PC-3 (cell line): ENCODE measurements at regions of chr2 and their contacts with region 1.

Region 1: DNA sequence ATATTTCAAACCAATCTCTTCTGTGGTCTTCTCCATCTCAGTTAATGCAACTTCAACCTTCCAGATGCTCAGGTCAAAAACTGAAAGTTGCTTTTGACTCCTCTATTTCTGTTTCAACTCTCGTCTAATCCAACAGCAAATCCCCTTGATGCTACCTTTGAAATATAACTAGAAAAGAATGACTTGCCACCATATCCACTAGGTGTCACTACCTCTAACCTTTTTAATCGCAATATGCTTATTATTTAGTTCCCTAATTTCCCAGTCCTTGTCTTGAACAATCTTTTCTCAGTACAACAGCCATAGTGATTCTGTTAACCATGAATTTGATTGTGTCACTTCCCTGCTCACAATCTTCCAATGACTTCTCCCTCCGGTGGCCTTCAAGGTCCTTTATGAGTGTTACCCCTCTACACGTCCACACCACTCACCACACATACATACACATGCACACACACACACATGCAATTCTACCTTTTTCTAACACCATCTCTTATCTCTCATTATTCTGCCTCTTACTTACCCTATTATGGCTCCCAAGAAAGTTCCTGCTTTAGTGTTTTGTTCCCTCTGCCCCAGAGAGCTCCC is 245.5 kb upstream of the KCNJ3 start:
- DNase-seq: peak; percentile 42
- ATAC-seq: no peak
- H3K4me3 ChIP-seq: no peak overlapping the region
- H3K27ac ChIP-seq: no peak overlapping the region
- H3K4me1 ChIP-seq: no peaks in the 10 kb centered on the region
- H3K27me3 ChIP-seq: no peaks in the 10 kb centered on the region
- CTCF ChIP-seq: peak; percentile 67

Region 2: DNA sequence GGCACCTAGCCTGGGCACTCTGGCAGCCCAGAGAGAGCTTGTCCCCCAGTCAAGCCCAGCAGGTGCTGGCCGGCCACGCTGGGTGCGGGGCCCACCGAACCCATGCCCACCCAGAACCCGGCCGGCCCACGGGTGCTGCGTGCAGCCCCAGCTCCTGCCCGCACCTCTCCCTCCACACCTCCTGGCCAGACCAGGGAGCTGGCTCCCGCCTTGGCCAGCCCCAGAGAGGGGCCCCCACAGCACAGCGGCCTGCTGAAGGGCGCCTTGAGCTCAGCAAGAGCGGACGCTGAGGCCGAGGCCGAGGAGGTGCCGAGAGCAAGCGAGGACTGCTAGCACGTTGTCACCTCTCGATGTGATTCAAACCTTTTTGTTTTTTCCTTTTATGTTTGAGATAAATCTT is 161.5 kb before region 1 on chr2:
- CTCF ChIA-PET with region 1: no interaction called
- POLR2A ChIA-PET with region 1: no interaction called
- intact Hi-C with region 1: no loop called
- DNase-seq: no peak
- ATAC-seq: no peak
- H3K4me3 ChIP-seq: no peak overlapping the region
- H3K27ac ChIP-seq: no peak overlapping the region
- H3K4me1 ChIP-seq: no peaks in the 10 kb centered on the region
- H3K27me3 ChIP-seq: no peaks in the 10 kb centered on the region
- CTCF ChIP-seq: no peak

Region 3: DNA sequence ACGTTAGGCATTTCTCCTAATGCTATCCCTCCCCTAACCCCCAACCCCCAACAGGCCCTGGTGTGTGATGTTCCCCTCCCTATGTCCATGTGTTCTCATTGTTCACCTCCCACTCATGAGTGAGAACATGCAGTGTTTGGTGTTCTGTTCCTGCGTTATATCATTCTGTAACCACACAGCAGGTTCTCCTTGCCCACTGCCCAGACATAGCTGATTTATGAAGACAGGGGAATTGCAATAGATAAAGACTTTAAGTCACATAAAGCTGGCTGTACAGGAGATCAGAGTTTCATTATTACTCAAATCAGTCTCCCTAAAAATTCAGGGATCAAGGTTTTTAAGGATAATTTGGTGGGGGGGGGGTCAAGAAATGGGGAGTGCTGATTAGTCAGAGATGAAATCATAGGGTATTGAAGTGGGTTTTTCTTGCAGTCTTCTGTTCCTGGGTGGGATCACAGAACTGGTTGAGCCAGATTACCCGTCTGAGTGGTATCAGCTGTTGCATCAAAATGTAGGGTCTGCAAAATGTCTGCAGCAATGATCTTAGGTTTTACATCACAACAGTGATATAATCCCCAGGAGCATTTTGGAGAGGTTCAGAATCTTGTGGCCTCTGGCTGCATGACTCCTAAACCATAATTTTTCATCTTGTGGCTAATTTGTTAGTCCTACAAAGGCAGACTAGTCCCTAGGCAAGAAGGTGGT is 146.6 kb before region 1 on chr2:
- CTCF ChIA-PET with region 1: no interaction called
- POLR2A ChIA-PET with region 1: no interaction called
- intact Hi-C with region 1: no loop called
- DNase-seq: no peak
- ATAC-seq: no peak
- H3K4me3 ChIP-seq: no peak overlapping the region
- H3K27ac ChIP-seq: no peak overlapping the region
- H3K4me1 ChIP-seq: no peaks in the 10 kb centered on the region
- H3K27me3 ChIP-seq: no peaks in the 10 kb centered on the region
- CTCF ChIP-seq: no peak

Region 4: GRCh38 chr2:154623819-154624218 is 170.8 kb after region 1 on chr2:
- CTCF ChIA-PET with region 1: no interaction called
- POLR2A ChIA-PET with region 1: no interaction called
- intact Hi-C with region 1: loop called (anchors 1 kb)
- DNase-seq: peak; percentile 49
- ATAC-seq: peak; percentile 85
- H3K4me3 ChIP-seq: no peak overlapping the region
- H3K27ac ChIP-seq: no peak overlapping the region
- H3K4me1 ChIP-seq: no peaks in the 10 kb centered on the region
- H3K27me3 ChIP-seq: no peaks in the 10 kb centered on the region
- CTCF ChIP-seq: peak; percentile 77